ENCODE measurements at regions of chr2 and their contacts with region 1.

Region 1: GRCh38 chr2:183541766-183542165 is 417.5 kb downstream of the NUP35 start:
- DNase-seq: no peak
- ATAC-seq: no peak
- H3K4me3 ChIP-seq: no peak overlapping the region
- H3K4me3 Mint-ChIP-seq: no peak overlapping the region
- H3K27ac ChIP-seq: no peak overlapping the region
- H3K27ac Mint-ChIP-seq: no peak overlapping the region
- H3K4me1 ChIP-seq: no peaks in the 10 kb centered on the region
- H3K4me1 Mint-ChIP-seq: no peaks in the 10 kb centered on the region
- H3K27me3 ChIP-seq: no peaks in the 10 kb centered on the region
- H3K27me3 Mint-ChIP-seq: no peaks in the 10 kb centered on the region
- CTCF ChIP-seq: no peak

Region 2: DNA sequence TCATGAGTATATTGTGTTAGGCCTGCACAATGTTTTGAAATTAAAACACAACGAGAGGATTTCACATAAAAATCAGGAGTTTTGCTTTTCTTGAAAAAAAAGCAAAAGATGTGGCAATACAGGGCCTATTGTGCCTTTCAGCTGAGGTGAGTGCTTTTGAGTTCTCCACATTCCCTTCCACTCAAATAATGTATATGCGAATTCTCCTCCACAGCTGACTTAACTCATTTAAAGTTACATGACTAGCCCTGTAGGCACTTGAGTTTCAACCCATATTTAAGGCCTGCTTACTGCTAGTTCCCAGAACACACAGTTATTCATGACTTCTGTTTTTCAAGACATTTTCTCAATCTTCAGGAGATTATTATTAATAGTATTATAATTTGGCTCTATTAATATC is 64.5 kb before region 1 on chr2:
- CTCF ChIA-PET with region 1: no interaction called
- POLR2A ChIA-PET with region 1: no interaction called
- intact Hi-C with region 1: no loop called
- DNase-seq: no peak
- ATAC-seq: no peak
- H3K4me3 ChIP-seq: no peak overlapping the region
- H3K4me3 Mint-ChIP-seq: no peak overlapping the region
- H3K27ac ChIP-seq: no peak overlapping the region
- H3K27ac Mint-ChIP-seq: no peak overlapping the region
- H3K4me1 ChIP-seq: no peaks in the 10 kb centered on the region
- H3K4me1 Mint-ChIP-seq: no peaks in the 10 kb centered on the region
- H3K27me3 ChIP-seq: no peaks in the 10 kb centered on the region
- H3K27me3 Mint-ChIP-seq: no peaks in the 10 kb centered on the region
- CTCF ChIP-seq: no peak

Region 3: DNA sequence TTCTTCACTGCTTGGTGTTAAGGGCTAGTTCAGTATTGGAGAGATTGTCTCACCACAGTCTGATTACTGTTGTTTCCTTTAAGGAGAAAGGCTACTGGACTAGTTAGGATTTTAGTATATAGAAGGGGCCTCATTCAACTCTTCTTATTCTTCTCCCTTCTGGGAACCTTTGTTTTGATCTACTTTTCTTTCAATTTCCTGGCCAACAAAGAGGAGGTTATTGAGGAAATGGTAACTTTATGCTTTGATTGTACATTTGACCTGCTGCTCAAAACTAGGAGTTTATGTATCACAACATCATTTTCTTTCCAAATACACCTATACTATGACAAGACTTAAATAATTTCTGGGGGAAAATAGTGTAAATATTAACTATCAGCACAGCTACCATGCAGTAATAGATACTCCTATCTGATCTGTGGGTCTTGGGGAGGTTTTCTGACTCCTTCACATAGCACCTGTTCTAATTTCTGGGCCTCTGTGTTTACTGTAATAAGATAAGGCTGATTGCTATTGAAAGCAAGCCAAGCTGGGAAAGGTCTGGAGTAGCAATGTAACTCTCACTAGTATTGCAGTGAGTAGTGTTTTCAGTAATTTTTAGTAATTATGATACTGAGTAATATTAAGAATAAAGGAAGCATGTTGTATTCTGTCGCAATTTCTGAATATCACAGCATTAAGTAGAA is 22.3 kb before region 1 on chr2:
- CTCF ChIA-PET with region 1: no interaction called
- POLR2A ChIA-PET with region 1: no interaction called
- intact Hi-C with region 1: no loop called
- DNase-seq: no peak
- ATAC-seq: no peak
- H3K4me3 ChIP-seq: no peak overlapping the region
- H3K4me3 Mint-ChIP-seq: no peak overlapping the region
- H3K27ac ChIP-seq: no peak overlapping the region
- H3K27ac Mint-ChIP-seq: no peak overlapping the region
- H3K4me1 ChIP-seq: no peaks in the 10 kb centered on the region
- H3K4me1 Mint-ChIP-seq: no peaks in the 10 kb centered on the region
- H3K27me3 ChIP-seq: no peaks in the 10 kb centered on the region
- H3K27me3 Mint-ChIP-seq: no peaks in the 10 kb centered on the region
- CTCF ChIP-seq: no peak

Region 4: GRCh38 chr2:183530333-183530901 is 11.3 kb before region 1 on chr2:
- CTCF ChIA-PET with region 1: no interaction called
- POLR2A ChIA-PET with region 1: no interaction called
- intact Hi-C with region 1: loop called in 1 of 2 experiments (anchors 1 kb)
- DNase-seq: no peak
- ATAC-seq: no peak
- H3K4me3 ChIP-seq: no peak overlapping the region
- H3K4me3 Mint-ChIP-seq: no peak overlapping the region
- H3K27ac ChIP-seq: no peak overlapping the region
- H3K27ac Mint-ChIP-seq: no peak overlapping the region
- H3K4me1 ChIP-seq: no peaks in the 10 kb centered on the region
- H3K4me1 Mint-ChIP-seq: no peaks in the 10 kb centered on the region
- H3K27me3 ChIP-seq: no peaks in the 10 kb centered on the region
- H3K27me3 Mint-ChIP-seq: no peaks in the 10 kb centered on the region
- CTCF ChIP-seq: no peak

Measured in CD8-positive, alpha-beta T cell (primary cell).